ENCODE measurements at regions of chr4 and their contacts with region 1.

Region 1: GRCh38 chr4:3945511-3946290 is 179.5 kb downstream of the ADRA2C start:
- DNase-seq: peak in 1 of 10 donors; percentile 60

Region 2: GRCh38 chr4:3531879-3532713 is 413.6 kb before region 1 on chr4 and contains the start of gene LRPAP1:
- intact Hi-C with region 1: loop called (anchors 10 kb)
- DNase-seq: peak; percentile 91 to 99 (median 95)